A549 (cell line): ENCODE measurements at regions of chr7 and their contacts with region 1.

Region 1: GRCh38 chr7:76314042-76314721 is 11.7 kb downstream of the HSPB1 start:
- DNase-seq: peak; percentile 92 to 95
- ATAC-seq: peak; percentile 40 to 67
- H3K4me3 ChIP-seq: no peak overlapping the region
- H3K27ac ChIP-seq: peak overlapping the region; percentile 76 to 83
- H3K4me1 ChIP-seq: peaks cover 27% of the 10 kb centered on the region
- CTCF ChIP-seq: peak; percentile 100
- EP300 ChIP-seq: no peak
- POLR2A ChIP-seq: no peak
- RAD21 ChIP-seq: peak; percentile 100

Region 2: DNA sequence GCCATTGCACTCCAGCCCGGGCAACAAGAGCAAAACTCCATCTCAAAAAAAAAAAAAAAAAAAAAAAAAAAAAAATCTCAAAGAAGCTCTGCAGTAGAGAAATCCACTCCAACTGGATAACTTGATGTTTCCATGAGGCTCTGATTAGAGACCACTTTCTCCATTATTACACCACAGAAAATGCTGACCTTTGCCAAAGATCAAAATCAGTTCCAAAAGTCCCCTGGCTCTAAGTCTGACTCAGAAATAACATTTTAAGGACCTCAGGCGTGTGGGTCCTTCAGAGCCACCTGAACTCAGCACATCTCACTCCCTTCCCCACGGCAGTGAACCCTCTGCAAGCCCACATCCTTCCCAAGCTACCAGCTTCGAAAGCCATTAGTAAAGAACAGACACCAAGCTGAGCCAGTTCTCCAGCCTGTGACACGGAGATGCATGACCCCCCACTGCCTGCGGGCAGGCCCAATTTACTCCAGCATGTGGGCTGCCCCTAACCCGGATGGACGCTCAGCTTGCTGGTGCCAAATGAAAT is 306.0 kb before region 1 on chr7:
- CTCF ChIA-PET with region 1: no interaction called
- POLR2A ChIA-PET with region 1: no interaction called
- DNase-seq: no peak
- ATAC-seq: no peak
- H3K4me3 ChIP-seq: no peak overlapping the region
- H3K27ac ChIP-seq: no peak overlapping the region
- H3K4me1 ChIP-seq: no peaks in the 10 kb centered on the region
- CTCF ChIP-seq: no peak
- EP300 ChIP-seq: no peak
- POLR2A ChIP-seq: no peak
- RAD21 ChIP-seq: no peak

Region 3: GRCh38 chr7:76191783-76192275 is 122.4 kb before region 1 on chr7:
- CTCF ChIA-PET with region 1: interaction called, 10 read pairs
- POLR2A ChIA-PET with region 1: no interaction called
- DNase-seq: peak in 1 of 2 experiments; percentile 76
- ATAC-seq: peak; percentile 47 to 84; a peak in 3 of 6 replicates
- H3K4me3 ChIP-seq: no peak overlapping the region
- H3K27ac ChIP-seq: no peak overlapping the region
- H3K4me1 ChIP-seq: no peaks in the 10 kb centered on the region
- CTCF ChIP-seq: no peak
- EP300 ChIP-seq: no peak
- POLR2A ChIP-seq: no peak
- RAD21 ChIP-seq: no peak

Region 4: GRCh38 chr7:76272851-76273497 is 41.2 kb before region 1 on chr7:
- CTCF ChIA-PET with region 1: interaction called, 764 read pairs
- POLR2A ChIA-PET with region 1: no interaction called
- DNase-seq: no peak
- ATAC-seq: peak in 1 of 2 experiments; percentile 21; a peak in 1 of 6 replicates
- H3K4me3 ChIP-seq: no peak overlapping the region
- H3K27ac ChIP-seq: peak overlapping the region in 1 of 2 experiments; percentile 18; a peak in 1 of 6 replicates
- H3K4me1 ChIP-seq: peaks cover 7% of the 10 kb centered on the region; the same call in 2 of the 3 replicates
- CTCF ChIP-seq: no peak
- EP300 ChIP-seq: no peak
- POLR2A ChIP-seq: no peak
- RAD21 ChIP-seq: no peak

Region 5: DNA sequence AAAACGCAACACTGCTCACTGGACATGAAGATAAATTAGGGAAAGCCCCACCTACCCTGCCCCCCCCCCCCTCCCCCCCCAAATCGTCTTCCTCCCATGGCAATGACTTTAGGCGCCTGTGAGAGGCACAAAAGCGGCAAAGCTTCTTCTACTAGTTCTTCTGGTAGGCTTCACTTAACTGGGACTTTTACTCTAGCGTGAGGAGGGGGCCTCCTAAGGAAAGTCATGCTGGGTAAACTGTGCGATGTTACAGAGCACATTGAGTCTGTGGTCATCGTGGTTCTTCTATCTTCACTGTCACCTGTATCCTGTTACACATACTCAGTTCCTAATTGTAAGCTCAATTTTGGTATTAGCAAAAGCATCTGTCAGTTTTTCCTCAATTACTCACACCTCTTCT is 13.4 kb after region 1 on chr7:
- CTCF ChIA-PET with region 1: interaction called, 764 read pairs
- POLR2A ChIA-PET with region 1: interaction called, 8 read pairs
- DNase-seq: no peak
- ATAC-seq: no peak
- H3K4me3 ChIP-seq: no peak overlapping the region
- H3K27ac ChIP-seq: peak overlapping the region in 1 of 2 experiments; percentile 17; a peak in 3 of 6 replicates
- H3K4me1 ChIP-seq: peaks cover 48% of the 10 kb centered on the region
- CTCF ChIP-seq: no peak
- EP300 ChIP-seq: no peak
- POLR2A ChIP-seq: no peak
- RAD21 ChIP-seq: no peak

Region 6: DNA sequence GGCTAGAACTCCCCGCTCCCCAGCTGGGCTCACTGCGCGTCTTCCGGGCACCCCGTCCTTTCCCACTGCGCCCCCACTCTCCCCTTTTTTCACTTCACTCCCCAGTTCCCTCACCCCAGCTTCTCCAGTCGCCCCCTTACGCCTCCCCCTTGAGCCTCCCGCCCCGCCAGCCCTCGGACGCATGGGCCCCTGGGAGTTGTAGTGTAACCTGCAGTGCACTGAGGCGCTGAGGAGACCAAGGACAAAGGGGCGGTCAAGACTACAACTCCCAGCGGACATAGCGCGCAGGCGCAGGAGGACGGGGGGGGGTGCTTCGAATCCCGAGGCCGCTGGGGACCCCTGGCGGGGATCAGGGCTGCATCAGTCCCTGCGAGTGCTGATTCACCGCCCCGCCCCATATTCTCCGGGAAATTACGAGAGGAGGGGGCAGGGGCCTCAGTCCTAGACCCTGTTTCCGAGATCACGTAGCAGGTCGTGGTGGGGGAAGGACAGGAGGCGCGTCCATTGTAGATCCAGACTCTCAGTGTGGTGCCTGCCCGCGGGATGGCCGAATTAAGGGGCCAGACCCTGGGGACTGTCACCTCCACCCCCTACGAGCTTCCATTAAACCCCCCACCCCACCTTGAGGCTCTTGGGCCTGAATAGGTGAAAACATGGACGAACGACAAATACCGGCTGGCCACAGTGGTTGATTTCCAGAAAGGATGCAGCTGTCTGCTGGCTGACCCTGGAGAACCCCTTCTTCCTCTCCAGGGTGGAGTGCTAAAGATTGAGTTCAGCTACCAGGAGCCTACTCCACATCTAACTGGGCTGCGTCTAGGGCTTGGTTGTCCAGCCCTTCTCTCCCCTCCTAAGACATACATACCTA is 45.2 kb after region 1 on chr7:
- CTCF ChIA-PET with region 1: interaction called, 20 read pairs
- POLR2A ChIA-PET with region 1: interaction called, 23 read pairs
- DNase-seq: peak; percentile 90 to 99
- ATAC-seq: peak; percentile 89 to 93
- H3K4me3 ChIP-seq: peak overlapping the region; percentile 96
- H3K27ac ChIP-seq: peak overlapping the region; percentile 100
- H3K4me1 ChIP-seq: peaks cover 40% of the 10 kb centered on the region
- CTCF ChIP-seq: peak; percentile 63
- EP300 ChIP-seq: no peak; a peak in 1 of 5 replicates
- POLR2A ChIP-seq: peak; percentile 26; the same call in 1 of the 2 replicates
- RAD21 ChIP-seq: peak; percentile 59 to 78